Right lobe of liver (tissue), 6 donors: ENCODE measurements at regions of chr19 and their contacts with region 1.

Region 1: GRCh38 chr19:32971715-32972540 is at the starts of genes CEP89 and FAAP24:
- DNase-seq: peak; percentile 97 to 98 (median 97)
- ATAC-seq: peak; percentile 98 to 99 (median 98)
- H3K4me3 ChIP-seq: peak within 1 kb of the TSS; percentile 71 to 84 (median 73)
- H3K27ac ChIP-seq: peak within 1 kb of the TSS; percentile 35 to 57 (median 38)
- H3K4me1 ChIP-seq: peaks cover 0 to 14% (median 6%) of the 10 kb centered on the region in 4 donors
- H3K27me3 ChIP-seq: no peaks in the 10 kb centered on the region
- CTCF ChIP-seq: peak in 2 of 4 donors; percentile 10 to 18
- POLR2A ChIP-seq: peak; percentile 56
- total RNA-seq, gene CEP89: 2.9 to 5.7 (median 4.7) TPM
- total RNA-seq, gene FAAP24: 0.51 to 1.7 (median 0.98) TPM in 5 of 6 experiments, not detected in the other

Region 2: GRCh38 chr19:32735936-32736335 is 236.0 kb before region 1 on chr19:
- intact Hi-C with region 1: no loop called
- DNase-seq: no peak
- ATAC-seq: no peak
- H3K4me3 ChIP-seq: no peak overlapping the region
- H3K27ac ChIP-seq: no peak overlapping the region
- H3K4me1 ChIP-seq: no peaks in the 10 kb centered on the region
- H3K27me3 ChIP-seq: no peaks in the 10 kb centered on the region
- CTCF ChIP-seq: no peak
- POLR2A ChIP-seq: no peak

Region 3: GRCh38 chr19:33110137-33110910 is 138.4 kb after region 1 on chr19:
- intact Hi-C with region 1: loop called (anchors 10 kb)
- DNase-seq: no peak
- ATAC-seq: no peak
- H3K4me3 ChIP-seq: no peak overlapping the region
- H3K27ac ChIP-seq: no peak overlapping the region
- H3K4me1 ChIP-seq: peaks cover 0 to 9% (median 0%) of the 10 kb centered on the region in 4 donors
- H3K27me3 ChIP-seq: no peaks in the 10 kb centered on the region
- CTCF ChIP-seq: no peak
- POLR2A ChIP-seq: no peak